Panc1 (cell line): ENCODE measurements at regions of chr21 and their contacts with region 1.

Region 1: GRCh38 chr21:21232320-21232719 is 234.1 kb downstream of the NCAM2 start:
- DNase-seq: peak; percentile 2
- ATAC-seq: no peak
- H3K4me3 ChIP-seq: no peak overlapping the region
- H3K27ac ChIP-seq: no peak overlapping the region
- H3K4me1 ChIP-seq: no peaks in the 10 kb centered on the region
- H3K27me3 ChIP-seq: no peaks in the 10 kb centered on the region
- CTCF ChIP-seq: peak; percentile 40; the same call in 1 of the 2 replicates

Region 2: GRCh38 chr21:21156957-21157356 is 75.4 kb before region 1 on chr21:
- CTCF ChIA-PET with region 1: no interaction called
- POLR2A ChIA-PET with region 1: no interaction called
- in situ Hi-C with region 1: no loop called
- intact Hi-C with region 1: no loop called
- DNase-seq: no peak
- ATAC-seq: no peak
- H3K4me3 ChIP-seq: no peak overlapping the region
- H3K27ac ChIP-seq: no peak overlapping the region
- H3K4me1 ChIP-seq: no peaks in the 10 kb centered on the region
- H3K27me3 ChIP-seq: no peaks in the 10 kb centered on the region
- CTCF ChIP-seq: no peak

Region 3: DNA sequence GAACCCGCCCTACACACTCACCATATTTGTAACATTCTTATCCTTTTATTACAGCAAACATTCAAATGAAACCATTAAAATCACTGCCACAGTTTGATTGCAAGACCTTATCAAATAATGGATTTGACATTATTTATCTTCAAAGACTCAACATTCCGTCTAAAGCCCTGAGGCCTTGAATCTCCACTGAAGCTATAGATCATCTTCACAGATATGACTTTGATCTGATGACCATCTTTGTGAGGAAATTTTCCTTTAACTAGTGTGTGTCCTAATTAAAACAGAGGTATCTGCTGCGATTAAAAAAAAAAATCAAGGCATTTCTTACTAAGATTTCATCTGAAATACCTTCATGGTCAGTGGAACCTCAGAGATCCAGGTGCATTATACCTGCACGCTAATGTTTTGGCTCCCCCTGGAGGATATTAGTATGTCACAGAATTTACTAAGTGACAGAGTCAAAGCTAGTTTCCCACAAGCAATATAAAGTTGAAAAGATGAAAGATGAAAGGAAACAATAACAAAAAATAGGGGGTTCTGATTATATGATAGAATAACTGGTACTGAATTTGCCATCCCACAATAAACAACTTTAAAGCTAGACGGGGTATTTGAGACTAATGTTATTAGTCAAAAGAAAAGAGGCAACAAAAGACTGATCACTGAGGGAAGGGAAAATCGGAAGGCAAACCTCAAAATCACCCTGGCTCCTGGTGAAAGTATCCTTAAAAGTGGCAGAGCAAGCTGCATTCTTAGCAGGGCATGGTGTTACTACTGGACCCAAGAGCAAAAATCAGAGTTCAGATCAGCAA is 689.3 kb after region 1 on chr21:
- CTCF ChIA-PET with region 1: no interaction called
- POLR2A ChIA-PET with region 1: no interaction called
- in situ Hi-C with region 1: no loop called
- intact Hi-C with region 1: loop called (anchors 5 kb)
- DNase-seq: no peak
- ATAC-seq: no peak
- H3K4me3 ChIP-seq: no peak overlapping the region
- H3K27ac ChIP-seq: no peak overlapping the region
- H3K4me1 ChIP-seq: no peaks in the 10 kb centered on the region
- H3K27me3 ChIP-seq: no peaks in the 10 kb centered on the region
- CTCF ChIP-seq: peak; percentile 61; the same call in 1 of the 2 replicates